ENCODE measurements at regions of chr7 and their contacts with region 1.

Region 1: DNA sequence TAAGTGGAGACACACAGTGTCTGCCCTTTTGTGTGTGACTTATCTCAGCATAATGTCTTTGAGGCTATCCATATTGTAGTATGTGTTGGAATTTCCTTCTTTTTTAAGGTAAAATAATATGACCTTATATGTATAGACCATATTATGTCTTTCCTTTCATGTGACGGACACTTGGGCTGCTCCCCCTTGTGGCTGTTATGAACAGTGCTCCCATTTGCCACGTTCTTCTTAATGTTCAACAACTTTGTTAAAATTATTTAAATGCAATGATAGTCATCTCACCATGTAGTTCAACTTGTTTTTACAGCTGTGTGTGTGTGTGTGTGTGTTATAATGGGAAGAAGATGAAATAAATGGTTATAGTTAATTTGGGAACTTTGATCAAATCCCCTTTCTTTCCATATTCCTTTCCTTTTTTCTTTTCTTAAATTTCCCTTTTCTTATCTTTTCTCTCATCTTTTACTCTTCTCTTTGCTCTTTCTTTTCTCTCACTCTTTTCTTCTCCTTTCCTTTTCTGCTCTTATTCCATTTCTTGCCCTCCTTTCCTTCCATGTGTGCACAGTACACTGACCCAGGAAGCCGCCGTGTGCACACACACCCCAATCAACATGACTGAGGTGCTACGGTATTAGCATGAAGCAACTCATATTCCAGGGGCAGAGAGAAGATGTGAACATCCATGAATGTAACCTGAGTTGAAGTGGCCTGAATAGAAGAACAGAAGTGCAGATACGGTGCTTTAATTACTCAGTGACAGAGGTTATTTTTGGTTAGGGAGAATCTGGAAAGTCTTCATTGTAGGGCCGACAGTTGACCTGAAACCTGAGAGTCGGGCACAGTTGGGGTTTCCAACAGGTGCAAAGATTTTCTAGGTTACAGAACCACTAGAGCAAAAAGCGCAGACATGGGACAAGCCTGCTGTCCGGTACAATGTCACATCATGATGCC is 596.7 kb downstream of the SDK1 start:
- DNase-seq: peak in 1 of 2 experiments; percentile 47
- H3K4me3 ChIP-seq: no peak overlapping the region
- H3K4me3 Mint-ChIP-seq: no peak overlapping the region
- H3K27ac Mint-ChIP-seq: no peak overlapping the region
- H3K4me1 ChIP-seq: no peaks in the 10 kb centered on the region
- H3K4me1 Mint-ChIP-seq: no peaks in the 10 kb centered on the region
- H3K27me3 ChIP-seq: no peaks in the 10 kb centered on the region
- H3K27me3 Mint-ChIP-seq: peaks cover 3% of the 10 kb centered on the region
- CTCF ChIP-seq: peak; percentile 66 to 82

Region 2: GRCh38 chr7:2886900-2887299 is 1010.8 kb before region 1 on chr7:
- CTCF ChIA-PET with region 1: no interaction called
- POLR2A ChIA-PET with region 1: no interaction called
- intact Hi-C with region 1: loop called (anchors 2 kb)
- DNase-seq: peak; percentile 76 to 77
- H3K4me3 ChIP-seq: no peak overlapping the region
- H3K4me3 Mint-ChIP-seq: no peak overlapping the region
- H3K27ac Mint-ChIP-seq: peak overlapping the region; percentile 52
- H3K4me1 ChIP-seq: no peaks in the 10 kb centered on the region
- H3K4me1 Mint-ChIP-seq: peaks cover 7% of the 10 kb centered on the region
- H3K27me3 ChIP-seq: no peaks in the 10 kb centered on the region
- H3K27me3 Mint-ChIP-seq: peaks cover 3% of the 10 kb centered on the region
- CTCF ChIP-seq: peak; percentile 70 to 92

Region 3: DNA sequence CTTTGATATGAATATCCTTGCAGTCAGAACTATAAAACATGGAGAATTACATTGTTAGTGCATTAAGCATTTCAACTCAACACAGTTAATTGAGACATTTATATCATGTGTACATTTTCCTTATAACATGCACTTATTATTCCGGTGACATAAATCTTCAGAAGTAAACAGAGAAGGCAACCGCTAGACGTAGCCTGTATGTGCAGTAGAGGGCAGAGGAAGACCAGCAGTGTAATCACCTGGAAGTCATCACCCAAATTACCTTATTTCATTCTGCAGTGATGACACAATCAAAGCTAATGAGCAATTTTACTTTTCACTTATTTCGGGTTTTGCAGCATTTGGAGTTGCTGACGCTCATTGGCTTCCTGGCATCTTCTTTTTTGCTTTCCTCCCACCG is 202.1 kb before region 1 on chr7:
- CTCF ChIA-PET with region 1: no interaction called
- POLR2A ChIA-PET with region 1: no interaction called
- intact Hi-C with region 1: loop called (anchors 1 kb)
- DNase-seq: no peak
- H3K4me3 ChIP-seq: no peak overlapping the region
- H3K4me3 Mint-ChIP-seq: no peak overlapping the region
- H3K27ac Mint-ChIP-seq: no peak overlapping the region
- H3K4me1 ChIP-seq: no peaks in the 10 kb centered on the region
- H3K4me1 Mint-ChIP-seq: no peaks in the 10 kb centered on the region
- H3K27me3 ChIP-seq: no peaks in the 10 kb centered on the region; the same call in 1 of the 2 replicates
- H3K27me3 Mint-ChIP-seq: no peaks in the 10 kb centered on the region
- CTCF ChIP-seq: peak; percentile 6 to 20